ENCODE measurements at regions of chr6 and their contacts with region 1.

Region 1: GRCh38 chr6:69866770-69867638 is 648 bp downstream of the COL19A1 start:
- DNase-seq: peak; percentile 48
- ATAC-seq: peak; percentile 75
- H3K4me3 ChIP-seq: peak overlapping the region; percentile 79
- H3K27ac ChIP-seq: peak overlapping the region; percentile 92
- H3K4me1 ChIP-seq: peaks cover 7% of the 10 kb centered on the region; the same call in 1 of the 2 replicates
- H3K27me3 ChIP-seq: no peaks in the 10 kb centered on the region
- CTCF ChIP-seq: peak; percentile 26 to 31 (median 27); a peak in 4 of 6 replicates
- EP300 ChIP-seq: 0 out of 4 replicates have a peak, but pooled peaks of 1 of the 2 experiments have one; percentile 23
- POLR2A ChIP-seq: peak; percentile 87
- RAD21 ChIP-seq: peak; percentile 56

Region 2: GRCh38 chr6:69758214-69758613 is 108.8 kb before region 1 on chr6:
- CTCF ChIA-PET with region 1: no interaction called
- POLR2A ChIA-PET with region 1: no interaction called
- RAD21 ChIA-PET with region 1: no interaction called
- SMC1A ChIA-PET with region 1: no interaction called
- in situ Hi-C with region 1: no loop called
- intact Hi-C with region 1: no loop called
- DNase-seq: no peak
- ATAC-seq: peak; percentile 54
- H3K4me3 ChIP-seq: no peak overlapping the region
- H3K27ac ChIP-seq: no peak overlapping the region
- H3K4me1 ChIP-seq: no peaks in the 10 kb centered on the region
- H3K27me3 ChIP-seq: no peaks in the 10 kb centered on the region
- CTCF ChIP-seq: no peak
- EP300 ChIP-seq: no peak
- POLR2A ChIP-seq: no peak
- RAD21 ChIP-seq: no peak

Region 3: DNA sequence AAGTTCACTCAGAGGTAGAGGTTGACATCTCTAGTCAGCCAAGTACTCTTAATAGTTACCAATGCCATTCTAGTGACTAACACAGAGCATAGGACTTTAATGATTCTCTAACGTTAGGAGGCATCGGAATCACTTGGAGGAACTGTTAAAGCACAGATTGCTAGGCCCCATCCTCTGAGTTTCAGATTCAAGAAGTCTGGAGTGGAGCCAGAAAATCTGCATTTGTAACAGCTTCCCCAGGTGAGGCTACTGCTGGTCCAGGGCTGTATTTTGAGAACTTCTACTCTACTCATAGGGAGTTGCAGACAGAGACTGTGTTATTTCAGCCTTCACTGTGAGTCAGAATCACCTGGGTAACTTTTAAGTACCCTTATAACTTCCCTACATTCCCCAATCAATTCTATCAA is 75.9 kb before region 1 on chr6:
- CTCF ChIA-PET with region 1: interaction called, 24 read pairs
- POLR2A ChIA-PET with region 1: interaction called, 13 read pairs
- RAD21 ChIA-PET with region 1: interaction called, 39 read pairs
- SMC1A ChIA-PET with region 1: interaction called, 10 read pairs
- in situ Hi-C with region 1: no loop called
- intact Hi-C with region 1: loop called (anchors 5 kb)
- DNase-seq: no peak
- ATAC-seq: peak; percentile 59
- H3K4me3 ChIP-seq: peak overlapping the region; percentile 43
- H3K27ac ChIP-seq: peak overlapping the region; percentile 46; the same call in 1 of the 2 replicates
- H3K4me1 ChIP-seq: peaks cover 27% of the 10 kb centered on the region
- H3K27me3 ChIP-seq: no peaks in the 10 kb centered on the region
- CTCF ChIP-seq: no peak
- EP300 ChIP-seq: no peak
- POLR2A ChIP-seq: no peak
- RAD21 ChIP-seq: no peak

Region 4: GRCh38 chr6:69813508-69813907 is 53.5 kb before region 1 on chr6:
- CTCF ChIA-PET with region 1: interaction called, 11 read pairs
- POLR2A ChIA-PET with region 1: interaction called, 14 read pairs
- RAD21 ChIA-PET with region 1: interaction called, 49 read pairs
- SMC1A ChIA-PET with region 1: interaction called, 43 read pairs
- in situ Hi-C with region 1: no loop called
- intact Hi-C with region 1: no loop called
- DNase-seq: no peak
- ATAC-seq: peak; percentile 42
- H3K4me3 ChIP-seq: no peak overlapping the region
- H3K27ac ChIP-seq: peak overlapping the region; percentile 38
- H3K4me1 ChIP-seq: peaks cover 41% of the 10 kb centered on the region
- H3K27me3 ChIP-seq: no peaks in the 10 kb centered on the region
- CTCF ChIP-seq: no peak
- EP300 ChIP-seq: peak in 1 of 2 experiments; percentile 61; a peak in 1 of 4 replicates
- POLR2A ChIP-seq: no peak
- RAD21 ChIP-seq: no peak

Region 5: GRCh38 chr6:69881322-69882151 is 14.5 kb after region 1 on chr6:
- CTCF ChIA-PET with region 1: interaction called, 91 read pairs
- POLR2A ChIA-PET with region 1: interaction called, 43 read pairs
- RAD21 ChIA-PET with region 1: interaction called, 93 read pairs
- SMC1A ChIA-PET with region 1: interaction called, 67 read pairs
- in situ Hi-C with region 1: no loop called
- intact Hi-C with region 1: loop called (anchors 1 kb)
- DNase-seq: peak; percentile 85
- ATAC-seq: peak; percentile 88
- H3K4me3 ChIP-seq: peak overlapping the region; percentile 48
- H3K27ac ChIP-seq: peak overlapping the region; percentile 96
- H3K4me1 ChIP-seq: peaks cover 24% of the 10 kb centered on the region
- H3K27me3 ChIP-seq: no peaks in the 10 kb centered on the region
- CTCF ChIP-seq: no peak
- EP300 ChIP-seq: peak; percentile 71 to 91; a peak in 3 of 4 replicates
- POLR2A ChIP-seq: peak; percentile 59
- RAD21 ChIP-seq: peak; percentile 20; the same call in 1 of the 2 replicates